Activated B cell treated with CpG ODN at 0.5 μM for 24 hours (primary cell): ENCODE measurements at regions of chr12 and their contacts with region 1.

Region 1: GRCh38 chr12:90253674-90254181 is 545.1 kb upstream of the ATP2B1 start:
- DNase-seq: peak; percentile 40
- ATAC-seq: peak; percentile 94
- H3K4me3 Mint-ChIP-seq: peak overlapping the region; percentile 64
- H3K27ac Mint-ChIP-seq: peak overlapping the region; percentile 87
- H3K4me1 Mint-ChIP-seq: peaks cover 26% of the 10 kb centered on the region
- H3K27me3 Mint-ChIP-seq: no peaks in the 10 kb centered on the region
- CTCF ChIP-seq: no peak

Region 2: GRCh38 chr12:89352492-89353187 is 901.1 kb before region 1 on chr12 and contains the start of gene DUSP6:
- CTCF ChIA-PET with region 1: no interaction called
- POLR2A ChIA-PET with region 1: no interaction called
- intact Hi-C with region 1: loop called (anchors 10 kb)
- DNase-seq: peak; percentile 62
- ATAC-seq: peak; percentile 61
- H3K4me3 Mint-ChIP-seq: peak within 1 kb of the TSS; percentile 84
- H3K27ac Mint-ChIP-seq: peak within 1 kb of the TSS; percentile 82
- H3K4me1 Mint-ChIP-seq: peaks cover 62% of the 10 kb centered on the region
- H3K27me3 Mint-ChIP-seq: no peaks in the 10 kb centered on the region
- CTCF ChIP-seq: no peak
- total RNA-seq, gene DUSP6: 1.6 and 1.8 TPM in 2 replicates

Region 3: GRCh38 chr12:89862511-89863179 is 391.1 kb before region 1 on chr12:
- CTCF ChIA-PET with region 1: no interaction called
- POLR2A ChIA-PET with region 1: no interaction called
- intact Hi-C with region 1: loop called (anchors 5 kb)
- DNase-seq: peak; percentile 30
- ATAC-seq: peak; percentile 76
- H3K4me3 Mint-ChIP-seq: peak overlapping the region; percentile 81
- H3K27ac Mint-ChIP-seq: peak overlapping the region; percentile 96
- H3K4me1 Mint-ChIP-seq: peaks cover 73% of the 10 kb centered on the region
- H3K27me3 Mint-ChIP-seq: no peaks in the 10 kb centered on the region
- CTCF ChIP-seq: no peak

Region 4: GRCh38 chr12:89893972-89894706 is 359.6 kb before region 1 on chr12:
- CTCF ChIA-PET with region 1: no interaction called
- POLR2A ChIA-PET with region 1: no interaction called
- intact Hi-C with region 1: no loop called
- DNase-seq: no peak
- ATAC-seq: peak; percentile 14
- H3K4me3 Mint-ChIP-seq: peak overlapping the region; percentile 21
- H3K27ac Mint-ChIP-seq: peak overlapping the region; percentile 72
- H3K4me1 Mint-ChIP-seq: peaks cover 36% of the 10 kb centered on the region
- H3K27me3 Mint-ChIP-seq: no peaks in the 10 kb centered on the region
- CTCF ChIP-seq: no peak

Region 5: GRCh38 chr12:89927226-89927698 is 326.5 kb before region 1 on chr12:
- CTCF ChIA-PET with region 1: no interaction called
- POLR2A ChIA-PET with region 1: no interaction called
- intact Hi-C with region 1: loop called (anchors 10 kb)
- DNase-seq: no peak
- ATAC-seq: peak; percentile 90
- H3K4me3 Mint-ChIP-seq: peak overlapping the region; percentile 89
- H3K27ac Mint-ChIP-seq: peak overlapping the region; percentile 98
- H3K4me1 Mint-ChIP-seq: peaks cover 69% of the 10 kb centered on the region
- H3K27me3 Mint-ChIP-seq: no peaks in the 10 kb centered on the region
- CTCF ChIP-seq: no peak

Region 6: DNA sequence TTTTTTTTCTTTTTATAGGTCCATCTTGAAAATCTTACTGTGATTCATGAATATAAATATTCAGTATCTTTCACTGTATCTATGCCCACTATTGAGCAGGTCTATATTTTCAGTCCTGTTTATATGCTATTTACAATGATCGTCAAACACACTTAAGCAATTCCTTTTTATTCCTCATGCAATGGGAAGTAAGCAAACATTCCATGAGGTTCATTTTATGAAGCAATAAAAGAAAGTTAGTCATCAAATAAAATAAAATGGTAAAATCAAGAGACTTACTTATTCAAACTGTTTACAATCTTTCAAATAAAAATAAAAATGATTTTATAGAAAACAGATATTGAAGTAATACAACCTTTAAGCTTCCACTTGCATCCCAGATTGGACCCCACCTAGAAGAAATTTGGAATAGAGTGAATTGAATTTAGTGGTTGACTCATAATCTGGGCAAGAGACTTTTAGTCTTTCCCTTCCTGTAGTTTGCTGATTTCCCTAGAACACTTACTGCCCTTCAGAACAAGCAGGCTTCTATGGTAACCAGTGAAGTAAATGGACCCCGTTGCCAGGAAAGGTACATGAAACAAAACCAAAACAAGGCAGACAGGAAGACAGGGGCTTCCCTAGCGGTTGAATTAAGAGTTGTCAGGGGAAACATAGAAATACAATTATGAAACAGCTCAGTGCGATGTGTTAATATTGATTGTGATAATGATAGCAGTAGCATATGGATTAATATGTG is 304.1 kb before region 1 on chr12:
- CTCF ChIA-PET with region 1: no interaction called
- POLR2A ChIA-PET with region 1: no interaction called
- intact Hi-C with region 1: no loop called
- DNase-seq: no peak
- ATAC-seq: peak; percentile 70
- H3K4me3 Mint-ChIP-seq: peak overlapping the region; percentile 64
- H3K27ac Mint-ChIP-seq: peak overlapping the region; percentile 90
- H3K4me1 Mint-ChIP-seq: peaks cover 62% of the 10 kb centered on the region
- H3K27me3 Mint-ChIP-seq: no peaks in the 10 kb centered on the region
- CTCF ChIP-seq: no peak

Region 7: GRCh38 chr12:90013409-90013808 is 240.3 kb before region 1 on chr12:
- CTCF ChIA-PET with region 1: no interaction called
- POLR2A ChIA-PET with region 1: no interaction called
- intact Hi-C with region 1: loop called (anchors 10 kb)
- DNase-seq: no peak
- ATAC-seq: peak; percentile 90
- H3K4me3 Mint-ChIP-seq: no peak overlapping the region
- H3K27ac Mint-ChIP-seq: no peak overlapping the region
- H3K4me1 Mint-ChIP-seq: peaks cover 16% of the 10 kb centered on the region
- H3K27me3 Mint-ChIP-seq: no peaks in the 10 kb centered on the region
- CTCF ChIP-seq: no peak

Region 8: GRCh38 chr12:90102957-90103652 is 150.6 kb before region 1 on chr12:
- CTCF ChIA-PET with region 1: interaction called, 9 read pairs
- POLR2A ChIA-PET with region 1: no interaction called
- intact Hi-C with region 1: loop called (anchors 1 kb)
- DNase-seq: no peak
- ATAC-seq: peak; percentile 75
- H3K4me3 Mint-ChIP-seq: peak overlapping the region; percentile 66
- H3K27ac Mint-ChIP-seq: peak overlapping the region; percentile 43
- H3K4me1 Mint-ChIP-seq: peaks cover 29% of the 10 kb centered on the region
- H3K27me3 Mint-ChIP-seq: no peaks in the 10 kb centered on the region
- CTCF ChIP-seq: no peak

Region 9: GRCh38 chr12:90207799-90208198 is 45.9 kb before region 1 on chr12:
- CTCF ChIA-PET with region 1: no interaction called
- POLR2A ChIA-PET with region 1: no interaction called
- intact Hi-C with region 1: loop called (anchors 5 kb)
- DNase-seq: no peak
- ATAC-seq: peak; percentile 56
- H3K4me3 Mint-ChIP-seq: no peak overlapping the region
- H3K27ac Mint-ChIP-seq: no peak overlapping the region
- H3K4me1 Mint-ChIP-seq: peaks cover 10% of the 10 kb centered on the region
- H3K27me3 Mint-ChIP-seq: no peaks in the 10 kb centered on the region
- CTCF ChIP-seq: no peak

Region 10: DNA sequence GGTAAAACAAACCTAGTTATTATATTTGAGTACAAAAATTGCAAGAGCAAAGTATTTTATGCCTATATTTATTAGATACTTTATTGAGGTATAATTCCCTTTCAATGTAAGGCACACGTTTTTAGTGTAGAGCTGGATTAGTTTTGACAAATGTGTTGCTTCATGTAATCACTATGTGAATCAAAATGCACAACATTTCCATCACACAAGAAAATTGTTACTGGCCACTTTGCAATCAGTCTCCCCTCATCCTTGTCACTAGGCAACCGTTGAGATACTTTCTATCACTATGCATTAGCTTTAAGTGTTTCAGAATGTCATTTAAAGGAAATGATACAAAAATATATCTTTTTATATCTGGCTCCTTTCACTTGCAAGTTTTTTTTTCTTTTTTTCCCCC is 170.2 kb after region 1 on chr12:
- CTCF ChIA-PET with region 1: no interaction called
- POLR2A ChIA-PET with region 1: no interaction called
- intact Hi-C with region 1: no loop called
- DNase-seq: no peak
- ATAC-seq: no peak
- H3K4me3 Mint-ChIP-seq: no peak overlapping the region
- H3K27ac Mint-ChIP-seq: no peak overlapping the region
- H3K4me1 Mint-ChIP-seq: no peaks in the 10 kb centered on the region
- H3K27me3 Mint-ChIP-seq: no peaks in the 10 kb centered on the region
- CTCF ChIP-seq: no peak

Region 11: GRCh38 chr12:90842477-90842876 is 588.7 kb after region 1 on chr12:
- CTCF ChIA-PET with region 1: no interaction called
- POLR2A ChIA-PET with region 1: no interaction called
- intact Hi-C with region 1: no loop called
- DNase-seq: no peak
- ATAC-seq: no peak
- H3K4me3 Mint-ChIP-seq: no peak overlapping the region
- H3K27ac Mint-ChIP-seq: no peak overlapping the region
- H3K4me1 Mint-ChIP-seq: no peaks in the 10 kb centered on the region
- H3K27me3 Mint-ChIP-seq: peaks cover 3% of the 10 kb centered on the region
- CTCF ChIP-seq: no peak